HEK293 (cell line): ENCODE measurements at regions of chr2 and their contacts with region 1.

Region 1: GRCh38 chr2:197453161-197453914 is at the start of gene COQ10B:
- H3K4me3 ChIP-seq: peak within 1 kb of the TSS; percentile 93
- H3K27ac ChIP-seq: peak within 1 kb of the TSS; percentile 93
- H3K4me1 ChIP-seq: no peaks in the 10 kb centered on the region
- CTCF ChIP-seq: peak; percentile 92

Region 2: GRCh38 chr2:197515739-197516392 is 62.5 kb after region 1 on chr2 and contains the start of gene MOB4:
- CTCF ChIA-PET with region 1: interaction called, 3 read pairs
- POLR2A ChIA-PET with region 1: interaction called, 13 read pairs
- H3K4me3 ChIP-seq: peak within 1 kb of the TSS; percentile 99
- H3K27ac ChIP-seq: peak within 1 kb of the TSS; percentile 87
- H3K4me1 ChIP-seq: peaks cover 2% of the 10 kb centered on the region; the same call in 1 of the 2 replicates
- CTCF ChIP-seq: peak; percentile 72